CD4-positive, alpha-beta T cell (primary cell): ENCODE measurements at regions of chr19 and their contacts with region 1.

Region 1: GRCh38 chr19:36114763-36115452 is at the start of gene POLR2I:
- DNase-seq: peak; percentile 96 to 100 (median 99)
- ATAC-seq: peak; percentile 86
- H3K4me3 ChIP-seq: peak within 1 kb of the TSS; percentile 97
- H3K4me3 Mint-ChIP-seq: peak within 1 kb of the TSS; percentile 94
- H3K27ac ChIP-seq: peak within 1 kb of the TSS; percentile 87 to 92
- H3K27ac Mint-ChIP-seq: peak within 1 kb of the TSS; percentile 94
- H3K4me1 ChIP-seq: peaks cover 40% of the 10 kb centered on the region
- H3K4me1 Mint-ChIP-seq: peaks cover 42% of the 10 kb centered on the region
- H3K27me3 ChIP-seq: no peaks in the 10 kb centered on the region
- H3K27me3 Mint-ChIP-seq: no peaks in the 10 kb centered on the region
- CTCF ChIP-seq: no peak
- total RNA-seq, gene POLR2I: 29.2 to 31.1 TPM

Region 2: DNA sequence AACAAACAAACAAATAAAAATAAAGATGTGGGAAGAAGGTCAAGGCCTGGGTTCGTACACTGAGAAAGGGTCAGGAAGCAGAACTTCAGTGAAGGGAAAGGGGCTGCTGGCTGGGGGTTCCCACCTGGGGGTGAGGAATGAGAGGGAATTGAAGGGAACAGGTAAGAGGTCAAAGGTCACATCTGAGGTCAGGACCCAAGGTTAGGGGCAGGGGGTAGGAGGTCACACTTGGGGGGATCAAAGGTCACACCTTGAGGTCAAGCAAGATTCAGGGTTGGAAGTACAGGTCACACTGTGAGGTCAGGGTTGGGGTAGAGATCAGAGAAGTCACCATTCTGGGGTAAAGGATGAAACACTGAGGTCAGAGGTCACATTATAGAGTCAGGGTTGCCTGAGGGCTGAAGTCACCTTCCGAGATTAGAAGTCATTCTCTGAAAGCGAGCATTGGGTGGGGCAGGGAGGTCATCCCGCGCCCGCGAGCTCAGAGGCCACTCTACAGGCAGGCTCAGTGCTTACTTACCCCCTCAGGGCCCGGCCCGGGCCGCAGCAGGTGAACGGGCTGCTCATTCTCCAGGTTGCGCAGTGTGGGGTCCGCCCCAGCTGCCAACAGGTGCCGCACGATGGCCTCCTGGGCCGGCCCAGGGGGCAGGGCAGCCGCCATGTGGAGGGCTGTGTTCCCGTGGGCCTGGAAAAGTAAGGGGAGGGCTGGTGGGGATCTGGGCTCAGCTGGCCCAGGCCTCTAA is 225.4 kb before region 1 on chr19:
- CTCF ChIA-PET with region 1: no interaction called
- POLR2A ChIA-PET with region 1: no interaction called
- intact Hi-C with region 1: no loop called
- DNase-seq: no peak
- ATAC-seq: no peak
- H3K4me3 ChIP-seq: no peak overlapping the region
- H3K4me3 Mint-ChIP-seq: no peak overlapping the region
- H3K27ac ChIP-seq: no peak overlapping the region
- H3K27ac Mint-ChIP-seq: peak overlapping the region; percentile 49
- H3K4me1 ChIP-seq: peaks cover 3% of the 10 kb centered on the region
- H3K4me1 Mint-ChIP-seq: peaks cover 11% of the 10 kb centered on the region
- H3K27me3 ChIP-seq: no peaks in the 10 kb centered on the region
- H3K27me3 Mint-ChIP-seq: no peaks in the 10 kb centered on the region
- CTCF ChIP-seq: no peak

Region 3: DNA sequence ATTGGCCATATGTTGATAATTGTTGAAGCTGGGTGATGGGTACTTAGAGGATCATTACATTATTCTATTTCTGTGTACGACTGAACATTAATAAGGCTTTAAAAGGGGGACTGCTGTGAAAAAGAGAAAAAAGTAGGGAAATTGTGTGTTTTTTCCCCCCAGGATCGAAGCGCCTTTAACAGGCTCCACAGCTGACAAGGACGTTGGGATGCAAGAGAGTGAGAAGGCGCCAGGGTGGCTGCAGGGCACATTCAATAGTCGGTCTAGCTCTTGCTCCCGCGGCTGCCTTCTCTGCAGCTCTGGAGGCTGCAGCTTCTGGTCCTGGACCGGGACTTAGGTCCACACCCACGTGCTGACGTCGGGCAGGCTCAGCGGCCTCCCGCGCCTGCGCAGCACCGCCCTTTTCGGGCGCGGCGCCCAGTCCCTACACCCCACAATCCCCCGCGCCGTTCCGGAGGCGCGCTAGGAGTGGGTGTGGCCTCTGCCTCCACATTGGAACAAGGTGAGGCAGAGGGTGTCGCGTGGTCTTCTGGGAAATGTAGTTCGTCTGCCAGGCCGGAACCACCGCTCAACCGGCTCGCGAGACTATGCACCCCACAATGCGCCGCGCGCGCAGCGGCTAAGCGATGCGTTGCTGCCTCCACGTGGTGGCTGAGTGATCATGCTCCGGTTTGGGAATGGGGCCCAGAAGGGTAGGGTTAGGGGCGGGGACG is 183.6 kb before region 1 on chr19:
- CTCF ChIA-PET with region 1: no interaction called
- POLR2A ChIA-PET with region 1: no interaction called
- intact Hi-C with region 1: loop called in 1 of 2 experiments (anchors 1 kb)
- DNase-seq: peak; percentile 97 to 100 (median 99)
- ATAC-seq: peak; percentile 95
- H3K4me3 ChIP-seq: peak overlapping the region; percentile 42
- H3K4me3 Mint-ChIP-seq: peak overlapping the region; percentile 83
- H3K27ac ChIP-seq: peak overlapping the region; percentile 59 to 78
- H3K27ac Mint-ChIP-seq: peak overlapping the region; percentile 90
- H3K4me1 ChIP-seq: peaks cover 49% of the 10 kb centered on the region
- H3K4me1 Mint-ChIP-seq: peaks cover 36% of the 10 kb centered on the region
- H3K27me3 ChIP-seq: no peaks in the 10 kb centered on the region
- H3K27me3 Mint-ChIP-seq: no peaks in the 10 kb centered on the region
- CTCF ChIP-seq: peak; percentile 84

Region 4: GRCh38 chr19:35942235-35942634 is 172.7 kb before region 1 on chr19:
- CTCF ChIA-PET with region 1: no interaction called
- POLR2A ChIA-PET with region 1: no interaction called
- intact Hi-C with region 1: no loop called
- DNase-seq: no peak
- ATAC-seq: no peak
- H3K4me3 ChIP-seq: no peak overlapping the region
- H3K4me3 Mint-ChIP-seq: no peak overlapping the region
- H3K27ac ChIP-seq: no peak overlapping the region
- H3K27ac Mint-ChIP-seq: no peak overlapping the region
- H3K4me1 ChIP-seq: peaks cover 23% of the 10 kb centered on the region
- H3K4me1 Mint-ChIP-seq: peaks cover 30% of the 10 kb centered on the region
- H3K27me3 ChIP-seq: no peaks in the 10 kb centered on the region
- H3K27me3 Mint-ChIP-seq: no peaks in the 10 kb centered on the region
- CTCF ChIP-seq: no peak

Region 5: GRCh38 chr19:35995048-35995993 is 119.6 kb before region 1 on chr19 and contains the start of gene SDHAF1:
- CTCF ChIA-PET with region 1: no interaction called
- POLR2A ChIA-PET with region 1: interaction called, 3 read pairs
- intact Hi-C with region 1: loop called in 1 of 2 experiments (anchors 5 kb)
- DNase-seq: peak; percentile 81 to 96 (median 91)
- ATAC-seq: peak; percentile 90
- H3K4me3 ChIP-seq: peak within 1 kb of the TSS; percentile 83
- H3K4me3 Mint-ChIP-seq: peak within 1 kb of the TSS; percentile 95
- H3K27ac ChIP-seq: peak within 1 kb of the TSS; percentile 56 to 63
- H3K27ac Mint-ChIP-seq: peak within 1 kb of the TSS; percentile 83
- H3K4me1 ChIP-seq: peaks cover 45% of the 10 kb centered on the region
- H3K4me1 Mint-ChIP-seq: peaks cover 41% of the 10 kb centered on the region
- H3K27me3 ChIP-seq: no peaks in the 10 kb centered on the region
- H3K27me3 Mint-ChIP-seq: no peaks in the 10 kb centered on the region
- CTCF ChIP-seq: no peak
- total RNA-seq, gene SDHAF1: 4.3 to 5.4 TPM

Region 6: DNA sequence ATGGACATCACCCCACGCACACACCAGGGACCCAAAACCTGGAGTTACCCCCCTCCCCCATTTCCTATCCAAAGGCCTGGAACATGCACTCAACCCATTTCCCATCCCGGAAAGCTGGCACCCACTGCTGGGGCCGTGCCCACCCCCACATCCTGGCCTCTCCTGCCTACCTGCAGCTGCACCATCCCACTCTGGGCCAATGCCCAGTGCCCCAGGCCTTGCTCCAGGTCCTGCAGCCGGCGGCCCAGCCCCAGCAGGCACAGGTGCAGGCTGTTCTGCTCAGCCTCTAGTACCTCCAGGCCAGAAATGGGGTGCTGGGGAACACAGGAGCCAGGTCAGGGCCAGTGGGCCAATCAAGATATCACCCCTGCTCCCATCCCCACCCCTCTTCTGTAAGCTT is 108.0 kb before region 1 on chr19:
- CTCF ChIA-PET with region 1: no interaction called
- POLR2A ChIA-PET with region 1: no interaction called
- intact Hi-C with region 1: no loop called
- DNase-seq: no peak
- ATAC-seq: no peak
- H3K4me3 ChIP-seq: no peak overlapping the region
- H3K4me3 Mint-ChIP-seq: no peak overlapping the region
- H3K27ac ChIP-seq: no peak overlapping the region
- H3K27ac Mint-ChIP-seq: no peak overlapping the region
- H3K4me1 ChIP-seq: peaks cover 22% of the 10 kb centered on the region
- H3K4me1 Mint-ChIP-seq: peaks cover 11% of the 10 kb centered on the region
- H3K27me3 ChIP-seq: no peaks in the 10 kb centered on the region
- H3K27me3 Mint-ChIP-seq: no peaks in the 10 kb centered on the region
- CTCF ChIP-seq: no peak

Region 7: GRCh38 chr19:36054119-36054732 is 60.7 kb before region 1 on chr19 and contains the start of gene THAP8:
- CTCF ChIA-PET with region 1: no interaction called
- POLR2A ChIA-PET with region 1: interaction called, 21 read pairs
- intact Hi-C with region 1: loop called (anchors 1 kb)
- DNase-seq: peak; percentile 99 to 100 (median 100)
- ATAC-seq: peak; percentile 84
- H3K4me3 ChIP-seq: peak within 1 kb of the TSS; percentile 82
- H3K4me3 Mint-ChIP-seq: peak within 1 kb of the TSS; percentile 97
- H3K27ac ChIP-seq: peak within 1 kb of the TSS; percentile 92 to 96
- H3K27ac Mint-ChIP-seq: peak within 1 kb of the TSS; percentile 100
- H3K4me1 ChIP-seq: peaks cover 24% of the 10 kb centered on the region
- H3K4me1 Mint-ChIP-seq: peaks cover 37% of the 10 kb centered on the region
- H3K27me3 ChIP-seq: no peaks in the 10 kb centered on the region
- H3K27me3 Mint-ChIP-seq: no peaks in the 10 kb centered on the region
- CTCF ChIP-seq: peak; percentile 76
- total RNA-seq, gene THAP8: 0.38 to 0.53 TPM

Region 8: DNA sequence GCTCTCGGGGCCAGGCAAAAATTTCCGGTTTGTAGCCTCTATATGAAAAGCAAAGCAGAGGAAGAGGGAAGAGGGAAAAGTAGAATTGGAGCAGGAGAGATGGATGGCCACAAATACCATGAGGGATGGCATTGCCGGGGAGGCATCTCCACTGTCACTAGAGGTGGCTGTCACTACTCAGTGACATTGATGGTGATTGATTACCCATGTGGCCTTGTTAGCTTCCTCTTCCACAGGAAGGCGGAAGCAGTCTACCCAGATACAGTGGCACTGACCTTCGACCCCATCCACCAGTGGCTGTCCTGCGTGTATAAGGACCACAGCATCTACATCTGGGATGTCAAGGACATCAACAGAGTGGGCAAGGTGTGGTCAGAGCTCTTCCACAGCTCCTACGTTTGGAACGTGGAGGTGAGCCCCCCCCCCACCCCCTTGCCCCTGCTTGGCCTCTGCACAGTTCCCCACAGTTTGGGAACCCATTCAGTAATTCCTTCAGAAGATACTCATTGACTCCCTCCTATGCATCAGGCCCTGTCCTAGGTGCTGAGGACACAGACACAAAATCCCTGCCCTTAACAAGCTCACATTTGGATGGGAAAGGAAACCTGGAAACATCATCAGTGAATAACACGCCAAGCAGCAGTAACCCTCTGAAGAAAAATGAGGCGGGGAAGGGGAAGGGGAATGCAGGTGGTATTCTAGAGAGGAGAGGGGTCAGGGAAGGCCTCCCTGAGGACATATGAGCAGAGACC is 41.6 kb before region 1 on chr19:
- CTCF ChIA-PET with region 1: no interaction called
- POLR2A ChIA-PET with region 1: no interaction called
- intact Hi-C with region 1: no loop called
- DNase-seq: no peak
- ATAC-seq: no peak
- H3K4me3 ChIP-seq: no peak overlapping the region
- H3K4me3 Mint-ChIP-seq: no peak overlapping the region
- H3K27ac ChIP-seq: no peak overlapping the region
- H3K27ac Mint-ChIP-seq: no peak overlapping the region
- H3K4me1 ChIP-seq: no peaks in the 10 kb centered on the region
- H3K4me1 Mint-ChIP-seq: no peaks in the 10 kb centered on the region
- H3K27me3 ChIP-seq: no peaks in the 10 kb centered on the region
- H3K27me3 Mint-ChIP-seq: no peaks in the 10 kb centered on the region
- CTCF ChIP-seq: no peak

Region 9: DNA sequence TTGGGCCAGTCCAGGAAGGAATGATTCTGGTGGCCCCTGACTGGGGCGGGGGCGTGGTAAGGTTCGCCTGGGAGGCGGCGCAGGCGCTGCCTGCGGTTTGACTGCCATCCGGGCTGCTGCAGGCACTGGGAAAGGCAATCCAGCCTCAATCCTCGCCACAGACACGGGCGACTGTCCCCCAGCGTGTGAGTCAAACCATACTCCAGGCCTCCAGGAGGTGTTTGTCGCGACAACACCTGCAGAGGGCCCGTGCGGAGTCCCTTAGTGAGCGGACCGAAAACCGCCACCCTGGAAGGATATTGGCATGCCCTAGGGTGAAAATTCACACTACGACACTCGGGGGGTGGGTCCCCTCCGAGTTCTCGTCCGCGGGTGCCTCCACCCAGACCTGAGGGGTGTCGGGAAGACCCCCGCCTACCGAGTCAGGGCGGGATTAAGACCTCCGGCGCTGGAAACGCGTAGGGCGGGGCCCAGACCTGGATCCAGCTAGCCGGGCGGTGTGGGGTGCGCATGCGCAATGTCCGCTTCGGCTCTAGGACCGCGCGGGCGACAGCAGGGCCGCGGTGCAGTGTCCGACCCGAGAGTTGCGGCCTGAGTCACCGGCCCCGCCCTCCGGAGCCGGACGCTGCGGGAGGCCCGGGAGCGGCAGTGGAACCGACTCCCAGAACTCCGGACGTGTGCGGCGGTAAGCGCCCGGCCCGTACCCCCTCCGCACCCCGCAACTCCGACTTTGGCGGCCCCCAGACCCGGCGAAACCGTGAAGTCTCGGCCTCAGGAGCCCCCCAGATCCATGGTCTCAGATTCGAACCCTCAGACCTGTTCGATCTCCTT is 24.8 kb after region 1 on chr19 and contains the start of gene CAPNS1:
- CTCF ChIA-PET with region 1: interaction called, 5 read pairs
- POLR2A ChIA-PET with region 1: interaction called, 22 read pairs
- intact Hi-C with region 1: loop called in 1 of 2 experiments (anchors 1 kb)
- DNase-seq: peak; percentile 82 to 95 (median 88)
- ATAC-seq: peak; percentile 63
- H3K4me3 ChIP-seq: peak within 1 kb of the TSS; percentile 97
- H3K4me3 Mint-ChIP-seq: peak within 1 kb of the TSS; percentile 89
- H3K27ac ChIP-seq: peak within 1 kb of the TSS; percentile 76 to 80
- H3K27ac Mint-ChIP-seq: peak within 1 kb of the TSS; percentile 60
- H3K4me1 ChIP-seq: peaks cover 25% of the 10 kb centered on the region
- H3K4me1 Mint-ChIP-seq: peaks cover 22% of the 10 kb centered on the region
- H3K27me3 ChIP-seq: no peaks in the 10 kb centered on the region
- H3K27me3 Mint-ChIP-seq: no peaks in the 10 kb centered on the region
- CTCF ChIP-seq: no peak
- total RNA-seq, gene CAPNS1: 167 to 177 TPM

Region 10: DNA sequence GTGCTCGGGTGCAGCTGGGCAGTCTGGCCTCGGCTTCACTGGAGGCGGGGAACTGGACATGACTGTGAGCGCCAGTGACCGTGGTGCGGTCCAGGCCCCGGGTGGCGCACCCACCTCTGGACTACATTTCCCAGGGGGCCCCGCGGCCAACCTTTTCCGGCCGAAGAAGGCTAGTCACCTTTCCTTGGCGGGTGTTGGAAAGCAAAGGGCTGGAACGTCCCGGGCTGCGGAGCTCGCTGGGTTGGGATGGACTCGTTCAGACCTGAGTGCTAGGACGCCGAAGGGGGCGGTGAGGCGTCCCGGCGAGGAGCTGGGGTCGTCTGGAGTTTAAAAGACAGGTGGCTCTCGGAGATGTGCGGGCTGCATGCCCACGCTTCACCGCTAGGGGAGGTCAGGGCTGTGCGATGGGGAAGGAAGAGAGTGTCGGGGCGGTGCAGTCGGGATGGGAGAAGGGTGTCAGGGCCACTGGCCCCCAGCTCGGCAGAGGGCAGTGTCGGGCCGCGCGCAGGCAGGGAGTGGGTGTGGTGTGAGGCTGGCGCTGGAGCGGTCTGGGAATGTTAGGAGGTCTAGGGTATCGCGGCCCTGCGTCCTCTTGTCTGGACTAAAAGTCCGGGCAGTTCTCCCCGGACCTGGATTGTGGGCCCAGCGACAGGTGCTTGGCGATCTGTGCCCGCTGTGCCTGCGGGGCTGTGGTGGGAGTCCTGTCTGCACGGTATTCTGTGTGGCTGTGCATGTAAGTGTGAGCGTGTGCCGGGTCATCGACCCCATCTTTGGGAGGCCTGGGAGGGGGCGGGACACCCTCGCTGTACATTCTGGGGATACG is 858.3 kb after region 1 on chr19:
- CTCF ChIA-PET with region 1: no interaction called
- POLR2A ChIA-PET with region 1: no interaction called
- intact Hi-C with region 1: loop called in 1 of 2 experiments (anchors 10 kb)
- DNase-seq: peak; percentile 48 to 91 (median 72)
- ATAC-seq: peak; percentile 98
- H3K4me3 ChIP-seq: peak overlapping the region; percentile 83
- H3K4me3 Mint-ChIP-seq: peak overlapping the region; percentile 92
- H3K27ac ChIP-seq: peak overlapping the region; percentile 57 to 78
- H3K27ac Mint-ChIP-seq: peak overlapping the region; percentile 94
- H3K4me1 ChIP-seq: peaks cover 17% of the 10 kb centered on the region
- H3K4me1 Mint-ChIP-seq: peaks cover 16% of the 10 kb centered on the region
- H3K27me3 ChIP-seq: no peaks in the 10 kb centered on the region
- H3K27me3 Mint-ChIP-seq: no peaks in the 10 kb centered on the region
- CTCF ChIP-seq: peak; percentile 97